ENCODE measurements at regions of chr12 and their contacts with region 1.

Region 1: DNA sequence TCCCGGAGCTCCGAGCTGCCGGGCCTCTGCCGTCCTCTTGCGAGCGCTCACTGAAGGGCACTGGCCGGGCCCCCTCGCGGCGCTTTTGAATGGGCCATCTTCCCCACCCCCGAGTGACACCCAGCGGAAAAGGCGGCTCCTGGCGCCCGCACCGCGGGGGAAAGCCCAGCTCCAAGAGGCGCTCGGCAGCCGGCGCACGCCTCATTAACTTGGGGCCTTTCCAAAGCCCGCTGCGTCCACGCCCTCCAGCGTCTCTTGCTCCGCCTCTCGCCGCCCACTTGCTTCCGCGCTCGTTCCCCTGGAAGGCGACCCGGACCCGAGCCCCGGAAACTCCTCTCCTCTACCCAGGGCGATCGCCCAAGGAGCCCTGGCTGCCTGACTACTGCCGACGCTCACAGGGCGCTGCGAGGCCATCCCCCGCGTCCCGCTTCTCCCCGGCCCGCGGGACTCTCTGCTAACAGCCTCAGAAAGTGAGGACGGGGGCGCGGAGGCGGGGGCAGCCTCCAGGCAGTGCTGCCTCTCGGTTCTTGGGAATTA is at the start of gene PHLDA1:
- DNase-seq: peak; percentile 72 to 90 (median 78)
- ATAC-seq: peak; percentile 80 to 85
- H3K4me3 Mint-ChIP-seq: peak within 1 kb of the TSS; percentile 82 to 97 (median 91)
- H3K27ac Mint-ChIP-seq: peak within 1 kb of the TSS; percentile 82 to 95 (median 90)
- H3K4me1 Mint-ChIP-seq: peaks cover 20 to 30% (median 25%) of the 10 kb centered on the region in 4 donors
- H3K27me3 Mint-ChIP-seq: peaks cover 0 to 8% (median 0%) of the 10 kb centered on the region in 5 donors
- polyA plus RNA-seq, gene PHLDA1: 0.04 to 0.13 (median 0.12) TPM

Region 2: GRCh38 chr12:76020731-76021672 is 10.6 kb before region 1 on chr12:
- POLR2A ChIA-PET with region 1: interaction called, 31 read pairs
- DNase-seq: peak in 9 of 10 donors; percentile 15 to 80 (median 61)
- ATAC-seq: peak; percentile 84 to 86
- H3K4me3 Mint-ChIP-seq: peak overlapping the region in 9 of 10 donors; percentile 13 to 82 (median 69)
- H3K27ac Mint-ChIP-seq: peak overlapping the region; percentile 78 to 96 (median 93)
- H3K4me1 Mint-ChIP-seq: peaks cover 11 to 45% (median 21%) of the 10 kb centered on the region in 4 donors
- H3K27me3 Mint-ChIP-seq: peaks cover 0 to 3% (median 0%) of the 10 kb centered on the region in 5 donors

Region 3: GRCh38 chr12:76049575-76050251 is 18.1 kb after region 1 on chr12:
- POLR2A ChIA-PET with region 1: no interaction called
- DNase-seq: no peak
- ATAC-seq: no peak
- H3K4me3 Mint-ChIP-seq: no peak overlapping the region
- H3K27ac Mint-ChIP-seq: peak overlapping the region in 1 of 10 donors; percentile 24
- H3K4me1 Mint-ChIP-seq: no peaks in the 10 kb centered on the region
- H3K27me3 Mint-ChIP-seq: no peaks in the 10 kb centered on the region

Measured in naive thymus-derived CD8-positive, alpha-beta T cell (primary cell).